Dendritic cell treated with granulocyte-macrophage colony-stimulating factor and Interleukin-4, amounts not matched to agents 40 ng/mL and 50 ng/mL, for 4 days (primary cell): ENCODE measurements at regions of chr1 and their contacts with region 1.

Region 1: DNA sequence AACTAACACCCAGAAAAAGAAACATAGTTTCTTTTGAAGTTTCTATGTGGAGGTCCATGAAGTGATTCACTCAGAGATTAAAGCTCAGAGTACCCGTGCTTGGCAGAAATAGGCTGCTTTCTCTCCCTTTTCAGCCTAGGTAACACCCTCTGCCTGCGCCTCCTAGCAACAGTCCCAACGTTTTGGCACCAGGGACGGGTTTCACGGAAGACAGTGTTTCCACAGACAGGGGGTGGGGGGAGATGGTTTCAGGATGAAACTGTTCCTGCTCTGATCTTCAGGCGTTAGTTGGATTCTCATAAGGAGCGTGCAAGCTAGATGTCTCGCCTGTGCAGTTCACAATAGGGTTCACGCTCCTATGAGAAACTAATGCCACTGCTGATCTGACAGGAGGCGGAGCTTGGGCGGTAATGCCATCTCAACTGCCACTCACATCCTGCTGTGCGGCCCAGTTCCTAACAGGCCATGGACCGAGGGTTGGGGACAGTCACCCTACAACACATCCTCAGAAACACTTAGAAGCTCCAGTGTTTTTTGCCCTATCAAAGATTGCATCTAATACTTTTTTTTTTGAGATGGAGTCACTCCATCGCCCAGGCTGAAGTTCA is 53.2 kb downstream of the CHML start:
- H3K4me3 Mint-ChIP-seq: no peak overlapping the region
- H3K27ac Mint-ChIP-seq: peak overlapping the region; percentile 48
- H3K4me1 Mint-ChIP-seq: peaks cover 33% of the 10 kb centered on the region
- H3K27me3 Mint-ChIP-seq: no peaks in the 10 kb centered on the region

Region 2: DNA sequence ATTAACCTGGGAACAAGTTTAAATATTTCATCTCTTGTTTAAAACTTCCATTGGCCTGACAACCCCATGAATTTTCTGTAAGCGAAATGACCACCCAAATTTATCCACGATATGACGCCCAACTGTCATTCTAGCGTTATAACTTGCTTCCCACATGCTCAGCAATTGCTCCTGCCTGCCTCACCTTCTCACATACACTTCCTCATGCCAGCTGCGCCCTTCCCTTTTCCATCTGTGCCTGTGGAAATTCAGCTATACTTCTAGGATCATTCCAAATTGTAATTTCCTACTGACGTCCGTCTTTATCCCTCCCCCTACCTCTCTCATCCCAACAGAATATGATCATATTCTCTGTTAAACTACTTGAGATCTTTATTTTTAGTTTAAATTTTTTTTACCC is 478.0 kb before region 1 on chr1:
- intact Hi-C with region 1: no loop called
- H3K4me3 Mint-ChIP-seq: no peak overlapping the region
- H3K27ac Mint-ChIP-seq: no peak overlapping the region
- H3K4me1 Mint-ChIP-seq: no peaks in the 10 kb centered on the region
- H3K27me3 Mint-ChIP-seq: no peaks in the 10 kb centered on the region

Region 3: GRCh38 chr1:241551759-241552638 is 35.0 kb before region 1 on chr1:
- intact Hi-C with region 1: loop called (anchors 5 kb)
- H3K4me3 Mint-ChIP-seq: peak overlapping the region; percentile 79
- H3K27ac Mint-ChIP-seq: peak overlapping the region; percentile 99
- H3K4me1 Mint-ChIP-seq: peaks cover 51% of the 10 kb centered on the region
- H3K27me3 Mint-ChIP-seq: no peaks in the 10 kb centered on the region